Left colon (tissue), 2 donors: ENCODE measurements at regions of chr16 and their contacts with region 1.

Region 1: DNA sequence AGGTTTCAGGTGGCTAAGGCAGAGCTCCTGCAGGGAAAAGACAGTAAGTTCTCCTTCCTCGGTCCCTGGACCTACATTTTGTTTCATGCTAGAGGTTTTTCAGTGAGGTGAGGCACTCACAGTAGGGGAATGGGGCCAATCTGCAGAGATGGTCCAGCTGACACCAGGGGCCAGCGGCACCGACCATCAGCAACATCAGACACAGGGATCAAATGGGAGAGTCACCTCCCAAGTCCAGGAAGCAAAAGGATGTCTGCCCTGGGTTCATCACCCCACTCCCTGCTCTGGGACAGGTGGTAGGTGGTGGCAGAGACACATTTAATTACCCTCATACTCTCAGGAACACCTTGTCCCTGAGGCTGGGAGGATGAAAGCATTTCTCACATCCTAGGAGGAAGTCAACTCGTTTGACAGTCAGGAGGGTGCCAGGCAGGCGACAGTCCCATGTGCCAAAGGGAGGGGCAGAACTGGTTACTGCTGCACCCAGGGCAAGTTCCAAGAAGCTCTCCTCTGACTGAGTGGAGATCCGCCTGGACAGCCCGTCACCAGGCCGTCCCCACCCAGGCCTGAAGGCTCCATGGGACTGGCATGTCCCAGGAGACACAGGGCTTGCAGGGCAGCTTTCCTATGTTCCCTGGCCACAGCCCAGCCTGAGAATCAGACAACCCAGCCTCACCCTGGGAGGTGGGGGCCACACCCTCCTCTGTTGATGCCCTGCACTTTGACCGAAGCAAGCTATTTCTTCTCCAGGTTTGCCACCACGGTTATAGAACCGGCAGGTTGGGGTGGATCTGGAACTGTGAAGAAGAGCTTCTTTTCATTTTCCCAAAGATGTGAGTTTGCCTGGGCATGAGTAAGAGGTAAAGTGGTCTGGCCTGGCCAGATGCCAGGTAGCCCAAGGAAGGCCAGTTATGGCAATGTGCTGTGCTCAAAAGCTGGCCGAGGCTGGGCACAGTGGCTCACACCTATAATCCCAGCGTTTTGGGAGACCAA is 19.1 kb downstream of the ATP6V0D1 start:
- DNase-seq: peak; percentile 87 to 97
- ATAC-seq: peak; percentile 64

Region 2: DNA sequence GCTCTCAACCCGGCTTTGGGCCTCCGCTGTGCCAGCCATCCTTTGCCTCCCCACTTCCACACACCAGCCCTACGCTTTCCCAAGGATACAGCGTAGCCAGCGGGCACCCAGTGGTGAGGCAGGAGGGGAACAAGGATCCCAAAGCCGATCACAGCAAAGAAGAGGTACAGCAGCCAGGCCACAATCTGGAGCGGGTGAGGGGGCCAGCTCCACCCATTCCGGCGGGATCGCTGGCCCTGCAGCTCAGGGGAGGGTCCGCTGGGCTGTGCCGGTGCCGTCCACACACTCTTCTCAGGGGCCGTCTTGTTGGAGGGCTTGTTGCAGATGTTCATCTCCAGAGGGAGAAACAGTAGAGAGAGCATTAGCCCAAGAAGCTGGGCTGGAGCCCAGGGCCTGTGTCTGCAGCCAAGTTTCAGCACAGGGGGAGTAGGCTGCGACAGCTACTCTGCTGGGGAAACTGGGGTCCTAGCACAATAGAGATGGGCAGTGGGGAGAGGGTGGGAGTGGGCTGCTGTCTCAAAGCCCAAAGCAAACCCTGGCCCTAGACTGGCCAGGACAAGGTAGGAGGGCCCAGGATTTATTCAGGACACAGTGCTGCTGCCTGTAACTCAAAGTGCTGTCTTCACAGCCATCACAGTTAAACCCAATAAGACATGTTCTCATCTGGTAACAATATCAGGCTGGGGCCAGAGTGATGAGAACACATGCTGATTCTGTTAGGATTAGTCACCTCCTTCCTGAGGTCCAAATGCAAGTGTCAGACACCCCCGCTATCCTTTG is 55.6 kb before region 1 on chr16:
- intact Hi-C with region 1: no loop called
- DNase-seq: no peak
- ATAC-seq: no peak

Region 3: GRCh38 chr16:67428146-67428731 is 33.7 kb before region 1 on chr16:
- intact Hi-C with region 1: loop called in 1 of 2 experiments (anchors 5 kb)
- DNase-seq: peak; percentile 78 to 86
- ATAC-seq: peak; percentile 41